ENCODE measurements at regions of chr5 and their contacts with region 1.

Region 1: DNA sequence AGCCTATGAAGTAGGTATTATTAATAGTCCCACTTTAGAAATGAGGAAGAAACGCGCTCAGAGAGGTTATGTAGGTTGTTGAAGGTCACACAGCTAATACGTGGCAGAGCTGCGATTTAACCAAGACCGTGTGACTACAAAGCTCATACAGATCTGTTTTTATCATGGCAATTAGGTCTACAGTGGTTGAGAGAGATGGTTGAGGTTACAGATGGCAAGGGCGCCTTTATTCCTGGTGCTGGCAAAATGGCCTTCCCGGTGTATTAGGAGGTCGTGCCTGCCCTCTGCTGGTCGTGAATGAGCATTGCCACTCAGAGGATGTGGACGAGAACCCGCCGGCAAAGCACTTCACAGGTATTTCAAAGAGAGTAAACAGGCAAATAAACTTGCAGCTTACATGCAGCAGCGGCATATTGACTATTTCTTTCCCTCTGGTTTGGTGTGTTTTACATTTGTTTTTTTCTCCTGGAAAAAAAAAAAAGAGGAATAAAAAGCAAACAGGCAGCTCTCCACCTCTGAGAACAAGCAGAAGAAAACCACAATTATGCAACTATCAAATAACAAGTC is 65.3 kb upstream of the EGFLAM start:
- DNase-seq: peak; percentile 32 to 80
- H3K4me3 ChIP-seq: no peak overlapping the region
- H3K27ac ChIP-seq: no peak overlapping the region
- H3K4me1 ChIP-seq: no peaks in the 10 kb centered on the region
- H3K27me3 ChIP-seq: no peaks in the 10 kb centered on the region
- CTCF ChIP-seq: peak; percentile 28 to 88 (median 71)
- POLR2A ChIP-seq: no peak

Region 2: DNA sequence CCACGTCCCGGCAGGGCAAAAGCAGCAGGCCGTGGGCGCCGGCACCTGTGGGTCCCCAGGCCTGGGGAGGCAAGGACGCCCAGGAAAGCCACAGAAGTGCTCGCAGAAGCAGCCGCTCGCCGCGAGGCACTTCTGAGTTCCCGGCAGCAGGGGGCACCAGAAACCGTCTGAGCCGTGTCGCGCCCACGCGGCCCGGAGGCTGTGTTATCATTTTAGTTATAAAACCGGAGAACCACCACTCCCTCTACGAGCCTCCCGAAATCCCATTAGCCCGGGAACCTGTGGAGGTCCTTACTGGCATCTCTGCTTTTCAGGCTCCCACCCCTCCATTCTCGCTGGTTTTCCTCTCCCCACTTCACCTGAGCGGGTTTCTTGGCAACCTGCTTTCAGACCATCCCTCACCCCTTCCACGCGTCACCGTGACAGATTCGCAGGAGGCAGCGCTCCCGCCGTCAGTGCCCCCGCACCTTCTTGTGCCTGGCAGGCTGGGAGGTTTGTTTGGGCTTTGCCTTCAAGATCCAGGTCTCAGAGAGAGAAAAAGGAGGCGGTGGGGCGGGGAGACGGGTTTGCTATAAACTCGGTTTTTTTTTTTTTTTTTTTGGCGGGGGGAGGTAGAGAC is 355.6 kb before region 1 on chr5:
- intact Hi-C with region 1: loop called (anchors 5 kb)
- DNase-seq: peak; percentile 35 to 65
- H3K4me3 ChIP-seq: peak overlapping the region; percentile 34 to 74 (median 51)
- H3K27ac ChIP-seq: no peak overlapping the region
- H3K4me1 ChIP-seq: no peaks in the 10 kb centered on the region
- H3K27me3 ChIP-seq: peaks cover 5 to 92% of the 10 kb centered on the region in 2 donors
- CTCF ChIP-seq: peak in 2 of 3 donors; percentile 50 to 61
- POLR2A ChIP-seq: no peak

Measured in breast epithelium (tissue), 4 donors.